Posterior vena cava (tissue), 2 donors: ENCODE measurements at regions of chr1 and their contacts with region 1.

Region 1: GRCh38 chr1:107748531-107748930 is 216.4 kb downstream of the VAV3 start:
- DNase-seq: no peak

Region 2: GRCh38 chr1:107430540-107431228 is 317.8 kb before region 1 on chr1:
- intact Hi-C with region 1: loop called in 1 of 2 experiments (anchors 2 kb)
- DNase-seq: no peak